ENCODE measurements at regions of chr15 and their contacts with region 1.

Region 1: DNA sequence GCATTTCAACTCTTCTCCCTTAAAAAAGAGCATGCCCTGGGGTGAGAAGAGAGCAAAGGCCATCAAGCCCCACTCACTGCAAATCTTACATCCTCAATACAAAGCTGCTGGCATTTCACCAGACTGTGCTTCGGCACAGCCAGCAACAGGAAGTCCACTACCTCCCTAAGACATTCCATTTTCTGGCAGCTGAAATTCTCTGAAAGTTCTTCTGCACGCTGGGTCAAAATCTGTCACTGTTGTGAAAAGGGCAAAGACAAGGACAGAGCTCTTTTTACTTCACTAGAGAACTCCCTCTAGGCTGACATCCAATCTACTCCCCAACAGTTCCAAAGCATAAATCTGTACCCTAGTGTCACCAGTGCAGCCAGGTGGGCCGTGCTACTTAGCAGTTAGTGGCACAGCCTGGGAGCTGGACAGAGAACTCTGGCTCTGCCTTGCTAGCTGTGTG is 6.3 kb downstream of the MTMR10 start:
- DNase-seq: peak in 1 of 2 donors; percentile 22
- ATAC-seq: peak; percentile 35 to 80 (median 72)
- H3K4me3 ChIP-seq: peak overlapping the region in 5 of 10 donors; percentile 2 to 12 (median 8)
- H3K27ac ChIP-seq: peak overlapping the region in 8 of 10 donors; percentile 13 to 61 (median 44)
- H3K4me1 ChIP-seq: peaks cover 12 to 91% (median 80%) of the 10 kb centered on the region in 9 donors
- H3K27me3 ChIP-seq: no peaks in the 10 kb centered on the region
- CTCF ChIP-seq: no peak

Region 2: DNA sequence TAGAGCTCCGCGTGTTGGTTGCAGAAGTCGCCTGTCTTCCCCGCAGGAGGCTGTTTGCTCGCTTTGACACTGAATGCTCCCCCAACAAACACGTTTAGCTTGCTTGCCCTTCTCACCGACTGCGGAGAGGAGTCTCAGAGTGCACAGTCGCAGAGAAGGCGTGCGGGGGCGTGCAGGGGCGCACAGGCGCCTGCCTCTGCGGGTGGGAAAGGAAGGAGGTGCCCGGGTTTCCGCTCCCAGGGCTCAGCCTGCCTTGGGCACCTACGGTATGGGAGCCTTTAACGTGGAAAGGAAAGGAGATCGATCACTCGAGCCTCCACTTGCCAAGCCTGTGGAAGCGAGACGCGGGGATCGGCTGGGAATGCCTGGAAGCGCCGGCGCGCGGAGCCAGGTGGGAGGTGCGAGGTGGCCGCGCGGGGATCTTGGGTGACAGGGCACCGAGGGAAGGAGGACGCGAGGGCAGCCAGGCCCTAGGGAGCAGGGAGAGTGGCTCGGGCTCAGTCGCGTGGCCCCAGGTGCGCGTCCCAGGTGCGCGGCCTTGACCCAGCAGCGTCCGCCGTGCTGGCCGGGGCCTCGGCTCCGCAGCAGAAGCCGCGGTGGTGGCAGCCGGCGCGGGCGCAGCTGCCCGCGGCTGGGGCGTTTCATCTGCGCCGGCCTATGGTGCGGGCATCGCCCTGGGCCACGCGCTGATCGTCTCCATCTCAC is 81.5 kb before region 1 on chr15 and contains the start of gene FAN1:
- intact Hi-C with region 1: loop called in 1 of 10 experiments (anchors 5 kb)
- DNase-seq: peak; percentile 88 to 90
- ATAC-seq: peak; percentile 96 to 100 (median 98)
- H3K4me3 ChIP-seq: peak within 1 kb of the TSS; percentile 50 to 89 (median 79)
- H3K27ac ChIP-seq: peak within 1 kb of the TSS in 9 of 10 donors; percentile 66 to 90 (median 84)
- H3K4me1 ChIP-seq: peaks cover 0 to 36% (median 17%) of the 10 kb centered on the region in 9 donors
- H3K27me3 ChIP-seq: no peaks in the 10 kb centered on the region
- CTCF ChIP-seq: peak in 1 of 9 donors; percentile 12
- total RNA-seq, gene FAN1: 8.2 to 28.0 (median 16.9) TPM

Region 3: DNA sequence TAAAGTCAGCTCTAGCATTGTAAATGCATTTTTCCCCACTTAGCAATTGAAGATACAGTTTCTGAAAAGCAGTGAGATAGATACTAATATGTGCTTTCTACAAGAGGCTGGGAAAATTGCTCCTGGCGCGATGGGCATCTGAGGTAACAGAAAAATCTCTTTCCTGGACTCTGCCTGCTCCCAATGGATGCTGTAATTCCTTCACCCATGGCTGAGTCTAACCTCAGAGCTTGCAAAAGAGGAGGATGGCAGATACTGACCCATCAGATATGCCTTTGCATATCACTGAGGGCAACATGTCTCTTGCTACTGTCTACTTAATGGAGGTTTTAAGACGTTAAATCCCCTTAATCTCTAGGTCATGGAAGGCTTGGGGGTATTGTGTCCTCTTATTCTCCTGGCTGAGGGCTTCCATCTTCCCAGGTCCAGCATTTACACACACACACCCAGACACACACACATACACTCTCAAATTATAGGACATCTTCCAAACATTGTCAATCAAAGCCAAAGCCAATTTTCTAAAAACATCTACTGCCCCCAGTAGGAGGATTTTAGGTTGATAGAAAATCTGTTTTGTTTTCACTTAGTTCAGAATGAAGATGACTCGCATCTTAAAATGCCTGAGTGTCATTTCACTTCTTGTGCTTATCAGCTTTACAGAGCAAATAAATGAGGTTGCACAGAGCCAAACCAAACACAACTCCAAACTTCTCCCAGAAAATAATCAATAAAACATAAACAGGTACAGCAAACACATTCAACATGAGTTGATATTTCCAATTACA is 114.0 kb after region 1 on chr15:
- intact Hi-C with region 1: loop called in 1 of 10 experiments (anchors 10 kb)
- DNase-seq: no peak
- ATAC-seq: no peak
- H3K4me3 ChIP-seq: no peak overlapping the region
- H3K27ac ChIP-seq: no peak overlapping the region
- H3K4me1 ChIP-seq: peaks cover 0 to 7% (median 0%) of the 10 kb centered on the region in 9 donors
- H3K27me3 ChIP-seq: peaks cover 0 to 7% (median 0%) of the 10 kb centered on the region in 7 donors
- CTCF ChIP-seq: peak in 4 of 9 donors; percentile 9 to 37 (median 34)

Region 4: GRCh38 chr15:31195871-31196270 is 210.8 kb after region 1 on chr15:
- intact Hi-C with region 1: no loop called
- DNase-seq: no peak
- ATAC-seq: no peak
- H3K4me3 ChIP-seq: no peak overlapping the region
- H3K27ac ChIP-seq: no peak overlapping the region
- H3K4me1 ChIP-seq: peaks cover 0 to 6% (median 0%) of the 10 kb centered on the region in 9 donors
- H3K27me3 ChIP-seq: no peaks in the 10 kb centered on the region
- CTCF ChIP-seq: no peak

Region 5: GRCh38 chr15:31254431-31255175 is 269.5 kb after region 1 on chr15:
- intact Hi-C with region 1: no loop called
- DNase-seq: peak in 1 of 2 donors; percentile 44
- ATAC-seq: peak in 5 of 8 donors; percentile 58 to 75 (median 69)
- H3K4me3 ChIP-seq: no peak overlapping the region
- H3K27ac ChIP-seq: peak overlapping the region in 1 of 10 donors; percentile 49
- H3K4me1 ChIP-seq: peaks cover 0 to 32% (median 0%) of the 10 kb centered on the region in 9 donors
- H3K27me3 ChIP-seq: no peaks in the 10 kb centered on the region
- CTCF ChIP-seq: peak in 1 of 9 donors; percentile 7

Measured in heart right ventricle (tissue), 16 donors.